ENCODE measurements at regions of chr2 and their contacts with region 1.

Region 1: DNA sequence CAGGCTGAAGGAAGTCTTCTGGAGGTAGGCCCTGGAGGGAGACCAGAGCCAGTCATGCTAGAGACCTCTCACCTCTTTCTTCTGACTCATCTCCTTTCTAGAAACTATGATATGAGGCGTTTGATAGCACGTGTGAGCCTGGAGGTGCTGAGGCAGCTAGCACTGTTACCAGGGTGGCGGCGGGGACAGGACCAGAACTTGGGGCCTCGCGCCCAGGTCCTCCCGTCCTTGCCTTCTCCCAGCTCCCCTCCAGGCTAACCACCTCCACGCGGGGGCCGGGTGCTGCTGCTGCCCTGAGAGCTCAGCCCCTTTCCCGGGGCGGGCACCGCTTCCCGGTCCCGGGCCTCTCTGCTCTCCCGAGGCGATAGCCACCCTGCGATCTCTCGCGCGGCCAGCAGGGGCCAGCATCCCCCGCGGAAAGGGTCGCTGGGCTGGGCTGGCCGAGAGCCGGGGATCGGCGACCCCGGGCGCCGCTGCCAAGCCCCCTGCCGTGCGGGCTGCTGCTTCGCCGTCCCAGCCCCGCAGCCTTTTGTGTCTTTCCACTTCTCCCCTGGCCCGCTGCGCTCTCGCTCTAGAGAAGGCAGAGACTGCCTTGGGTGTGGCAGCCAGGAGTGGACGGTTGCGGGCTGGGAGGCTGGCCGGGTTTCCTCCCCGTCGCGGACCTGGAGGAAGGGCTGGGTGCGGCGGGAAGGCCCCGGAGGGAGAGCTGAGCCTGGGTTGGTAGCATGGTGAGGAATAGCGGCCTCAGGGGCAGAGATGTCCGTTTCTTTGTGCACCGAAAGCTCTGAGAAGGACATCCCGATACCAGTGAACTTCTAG is 49.1 kb downstream of the TMEM17 start:
- DNase-seq: peak; percentile 57 to 95 (median 84)
- ATAC-seq: peak; percentile 92 to 95 (median 93)
- H3K4me3 ChIP-seq: peak overlapping the region; percentile 45 to 85 (median 58)
- H3K27ac ChIP-seq: peak overlapping the region; percentile 54 to 85 (median 80)
- H3K4me1 ChIP-seq: peaks cover 0 to 8% (median 3%) of the 10 kb centered on the region in 3 donors
- H3K27me3 ChIP-seq: no peaks in the 10 kb centered on the region
- CTCF ChIP-seq: peak; percentile 88 to 97 (median 96)

Region 2: GRCh38 chr2:62774555-62775366 is 317.8 kb after region 1 on chr2:
- intact Hi-C with region 1: loop called (anchors 5 to 10 kb)
- DNase-seq: peak in 2 of 6 donors; percentile 10 to 36
- ATAC-seq: peak; percentile 90 to 94 (median 92)
- H3K4me3 ChIP-seq: no peak overlapping the region
- H3K27ac ChIP-seq: no peak overlapping the region
- H3K4me1 ChIP-seq: peaks cover 0 to 5% (median 0%) of the 10 kb centered on the region in 3 donors
- H3K27me3 ChIP-seq: no peaks in the 10 kb centered on the region
- CTCF ChIP-seq: peak in 3 of 4 donors; percentile 70 to 80 (median 73)

Region 3: DNA sequence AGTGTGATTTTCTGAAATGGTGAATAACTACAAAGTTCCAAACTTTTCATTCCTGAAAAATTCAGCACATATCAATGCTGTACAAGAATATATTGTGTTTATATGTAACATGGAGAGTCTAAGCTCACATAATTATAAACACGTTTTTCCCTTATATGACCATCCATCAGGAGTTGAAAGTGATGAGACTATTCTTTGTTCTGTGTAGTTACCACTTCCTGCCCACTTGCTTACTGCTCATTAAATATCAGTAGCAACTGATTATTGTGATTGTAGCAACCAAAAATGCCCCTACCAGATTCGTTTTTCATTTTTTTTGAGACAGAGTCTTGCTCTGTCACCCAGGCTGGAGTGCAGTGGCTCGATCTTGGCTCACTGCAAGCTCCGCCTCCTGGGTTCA is 624.5 kb after region 1 on chr2:
- intact Hi-C with region 1: no loop called
- DNase-seq: no peak
- ATAC-seq: no peak
- H3K4me3 ChIP-seq: no peak overlapping the region
- H3K27ac ChIP-seq: no peak overlapping the region
- H3K4me1 ChIP-seq: no peaks in the 10 kb centered on the region
- H3K27me3 ChIP-seq: no peaks in the 10 kb centered on the region
- CTCF ChIP-seq: no peak

Region 4: DNA sequence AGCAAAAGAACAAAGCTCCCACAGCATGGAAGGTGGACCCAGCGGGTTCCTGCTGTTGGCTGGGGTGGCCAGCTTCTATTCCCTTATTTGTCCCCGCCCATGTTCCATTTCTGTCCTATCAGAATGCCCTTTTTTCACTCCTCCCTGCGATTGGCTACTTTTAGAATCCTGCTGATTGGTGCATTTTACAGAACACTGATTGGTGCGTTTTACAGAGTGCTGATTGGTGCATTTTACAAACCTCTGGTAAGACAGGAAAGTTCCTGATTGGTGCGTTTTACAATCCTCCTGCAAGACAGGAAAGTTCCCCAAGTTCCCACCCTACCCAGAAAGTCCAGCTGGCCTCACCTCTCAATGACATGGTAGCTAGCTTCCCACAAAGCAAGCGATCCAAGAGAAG is 1344.5 kb after region 1 on chr2:
- intact Hi-C with region 1: no loop called
- DNase-seq: no peak
- ATAC-seq: no peak
- H3K4me3 ChIP-seq: no peak overlapping the region
- H3K27ac ChIP-seq: no peak overlapping the region
- H3K4me1 ChIP-seq: no peaks in the 10 kb centered on the region
- H3K27me3 ChIP-seq: no peaks in the 10 kb centered on the region
- CTCF ChIP-seq: no peak

Measured in pancreas (tissue), 10 donors.